ENCODE measurements at regions of chr12 and their contacts with region 1.

Region 1: DNA sequence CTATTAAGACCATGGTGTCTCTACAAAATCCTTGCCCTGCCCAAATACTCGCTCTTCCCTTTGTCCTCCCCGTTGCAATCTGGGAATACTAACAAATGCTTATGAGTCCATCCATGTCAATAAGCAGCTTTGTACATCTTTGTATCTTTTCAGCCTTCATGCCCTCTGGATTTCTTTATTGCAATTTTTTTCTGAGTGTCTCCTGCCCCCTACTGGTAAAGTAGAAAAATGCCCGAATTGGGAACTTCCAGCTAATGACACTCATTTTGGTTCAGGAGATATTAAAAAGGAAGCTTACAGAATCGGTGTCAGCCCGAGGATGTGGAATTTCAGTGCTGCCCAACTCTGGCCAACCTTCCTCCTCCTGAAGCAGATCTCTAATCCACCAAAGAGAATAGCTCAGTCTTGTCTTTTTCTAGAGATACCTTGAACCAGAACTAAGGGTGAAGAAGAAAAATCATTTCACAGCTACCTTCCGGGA is 46.0 kb downstream of the SH2B3 start:
- DNase-seq: no peak
- H3K4me3 ChIP-seq: no peak overlapping the region
- H3K27me3 ChIP-seq: no peaks in the 10 kb centered on the region
- CTCF ChIP-seq: peak; percentile 80

Region 2: GRCh38 chr12:111224186-111225066 is 227.3 kb before region 1 on chr12:
- CTCF ChIA-PET with region 1: no interaction called
- POLR2A ChIA-PET with region 1: no interaction called
- DNase-seq: no peak
- H3K4me3 ChIP-seq: no peak overlapping the region
- H3K27me3 ChIP-seq: no peaks in the 10 kb centered on the region
- CTCF ChIP-seq: no peak

Region 3: DNA sequence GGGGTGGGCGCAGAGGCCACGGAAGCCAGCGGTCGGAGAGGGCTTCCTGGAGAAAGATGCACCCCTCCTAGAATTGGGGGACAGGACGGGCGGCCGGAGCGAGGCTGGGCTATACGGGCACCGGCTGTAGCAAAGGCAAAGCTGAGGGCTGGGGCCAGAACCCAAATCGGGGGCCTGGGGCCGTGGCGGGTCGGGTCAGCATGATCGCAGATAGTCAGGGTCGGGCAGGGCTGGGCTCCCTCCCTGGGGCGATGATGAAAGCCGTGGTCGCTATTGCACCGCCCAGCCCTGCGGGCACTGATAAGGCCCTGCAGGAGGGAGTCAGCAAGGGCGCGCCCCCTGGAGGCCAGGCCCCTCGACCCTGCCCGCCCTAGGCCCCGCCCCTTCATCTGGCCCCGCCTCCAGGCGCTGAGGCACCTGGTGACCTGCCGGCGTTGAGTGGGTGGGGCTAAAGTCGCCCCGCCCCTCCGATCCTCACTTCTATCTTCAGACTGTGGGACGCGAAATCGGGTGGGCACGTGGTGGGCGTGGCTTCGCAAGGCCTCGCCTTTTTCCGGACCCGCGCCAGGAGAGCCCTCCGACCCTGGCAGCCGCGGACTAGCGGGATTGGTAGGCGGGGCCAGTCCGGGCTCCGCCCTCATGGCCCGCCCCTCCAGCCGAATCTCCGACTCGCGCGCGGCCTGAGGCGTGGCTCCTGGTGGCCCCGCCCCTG is 46.4 kb before region 1 on chr12:
- CTCF ChIA-PET with region 1: interaction called, 260 read pairs
- POLR2A ChIA-PET with region 1: interaction called, 3 read pairs
- DNase-seq: peak; percentile 60
- H3K4me3 ChIP-seq: peak overlapping the region; percentile 96
- H3K27me3 ChIP-seq: no peaks in the 10 kb centered on the region
- CTCF ChIP-seq: peak; percentile 56

Region 4: GRCh38 chr12:111434680-111435338 is 16.9 kb before region 1 on chr12:
- CTCF ChIA-PET with region 1: interaction called, 14 read pairs
- POLR2A ChIA-PET with region 1: interaction called, 4 read pairs
- DNase-seq: no peak
- H3K4me3 ChIP-seq: no peak overlapping the region; the same call in 1 of the 2 replicates
- H3K27me3 ChIP-seq: no peaks in the 10 kb centered on the region
- CTCF ChIP-seq: no peak

Region 5: DNA sequence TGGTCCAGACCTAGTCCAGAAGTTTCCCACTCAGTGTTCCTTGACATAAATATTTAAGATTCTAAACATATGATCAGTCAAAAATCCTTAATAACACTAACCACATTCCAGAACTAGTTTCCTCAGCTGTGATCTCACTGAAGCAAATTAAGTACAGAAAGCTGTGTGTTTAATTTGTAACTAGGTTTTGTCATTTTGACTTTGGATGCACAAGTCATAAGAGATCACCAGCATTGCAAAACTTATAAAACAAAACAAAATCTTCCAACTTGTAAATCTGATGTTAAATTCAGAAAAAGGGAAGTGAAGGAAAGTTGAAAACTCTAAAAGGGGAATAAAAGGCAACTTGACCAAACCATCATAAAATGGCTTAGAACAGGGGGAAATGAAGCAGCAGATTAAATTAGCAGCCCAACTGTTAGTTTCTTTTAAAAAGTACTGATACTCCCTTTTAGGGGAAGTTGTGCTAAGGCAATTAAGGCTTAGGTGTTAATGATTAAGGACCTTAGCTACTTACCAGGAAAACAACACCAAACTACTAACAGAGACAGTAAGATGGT is 10.6 kb after region 1 on chr12:
- CTCF ChIA-PET with region 1: interaction called, 17 read pairs
- POLR2A ChIA-PET with region 1: no interaction called
- DNase-seq: peak; percentile 89
- H3K4me3 ChIP-seq: no peak overlapping the region
- H3K27me3 ChIP-seq: no peaks in the 10 kb centered on the region
- CTCF ChIP-seq: no peak

Measured in BJ (cell line).